ENCODE measurements at regions of chr14 and their contacts with region 1.

Region 1: GRCh38 chr14:67426983-67427606 is 15.1 kb upstream of the PLEK2 start:
- DNase-seq: peak; percentile 81 to 89
- H3K4me3 ChIP-seq: no peak overlapping the region
- H3K27ac ChIP-seq: peak overlapping the region in 1 of 3 donors; percentile 62
- H3K4me1 ChIP-seq: peaks cover 4 to 15% of the 10 kb centered on the region in 2 donors
- H3K27me3 ChIP-seq: no peaks in the 10 kb centered on the region
- CTCF ChIP-seq: peak; percentile 66 to 92 (median 86)
- POLR2A ChIP-seq: no peak

Region 2: GRCh38 chr14:67571272-67571850 is 144.3 kb after region 1 on chr14:
- intact Hi-C with region 1: loop called (anchors 10 kb)
- DNase-seq: peak; percentile 61 to 62
- H3K4me3 ChIP-seq: no peak overlapping the region
- H3K27ac ChIP-seq: no peak overlapping the region
- H3K4me1 ChIP-seq: peaks cover 15 to 17% of the 10 kb centered on the region in 2 donors
- H3K27me3 ChIP-seq: no peaks in the 10 kb centered on the region
- CTCF ChIP-seq: peak; percentile 35 to 77 (median 68)
- POLR2A ChIP-seq: no peak

Region 3: GRCh38 chr14:67704484-67705089 is 277.5 kb after region 1 on chr14:
- intact Hi-C with region 1: loop called (anchors 10 kb)
- DNase-seq: no peak
- H3K4me3 ChIP-seq: no peak overlapping the region
- H3K27ac ChIP-seq: no peak overlapping the region
- H3K4me1 ChIP-seq: no peaks in the 10 kb centered on the region
- H3K27me3 ChIP-seq: no peaks in the 10 kb centered on the region
- CTCF ChIP-seq: peak in 5 of 6 experiments; percentile 40 to 85 (median 74)
- POLR2A ChIP-seq: no peak

Region 4: GRCh38 chr14:68084256-68084655 is 657.2 kb after region 1 on chr14:
- intact Hi-C with region 1: no loop called
- DNase-seq: no peak
- H3K4me3 ChIP-seq: no peak overlapping the region
- H3K27ac ChIP-seq: no peak overlapping the region
- H3K4me1 ChIP-seq: peaks cover 18 to 23% of the 10 kb centered on the region in 2 donors
- H3K27me3 ChIP-seq: no peaks in the 10 kb centered on the region
- CTCF ChIP-seq: no peak
- POLR2A ChIP-seq: no peak